T-cell (primary cell): ENCODE measurements at regions of chr12 and their contacts with region 1.

Region 1: GRCh38 chr12:111927346-111927745 is 85.3 kb downstream of the MAPKAPK5 start:
- DNase-seq: no peak
- ATAC-seq: no peak
- H3K4me3 ChIP-seq: no peak overlapping the region
- H3K4me3 Mint-ChIP-seq: no peak overlapping the region
- H3K27ac ChIP-seq: no peak overlapping the region
- H3K27ac Mint-ChIP-seq: no peak overlapping the region
- H3K4me1 ChIP-seq: no peaks in the 10 kb centered on the region
- H3K4me1 Mint-ChIP-seq: no peaks in the 10 kb centered on the region
- H3K27me3 ChIP-seq: no peaks in the 10 kb centered on the region
- H3K27me3 Mint-ChIP-seq: no peaks in the 10 kb centered on the region

Region 2: GRCh38 chr12:111846016-111846415 is 81.3 kb before region 1 on chr12:
- CTCF ChIA-PET with region 1: no interaction called
- POLR2A ChIA-PET with region 1: no interaction called
- DNase-seq: no peak
- ATAC-seq: no peak
- H3K4me3 ChIP-seq: no peak overlapping the region
- H3K4me3 Mint-ChIP-seq: no peak overlapping the region
- H3K27ac ChIP-seq: no peak overlapping the region
- H3K27ac Mint-ChIP-seq: peak overlapping the region in 1 of 2 donors; percentile 3
- H3K4me1 ChIP-seq: peaks cover 7 to 23% of the 10 kb centered on the region in 2 experiments
- H3K4me1 Mint-ChIP-seq: peaks cover 56 to 57% (median 56%) of the 10 kb centered on the region in 3 donors
- H3K27me3 ChIP-seq: no peaks in the 10 kb centered on the region
- H3K27me3 Mint-ChIP-seq: no peaks in the 10 kb centered on the region

Region 3: DNA sequence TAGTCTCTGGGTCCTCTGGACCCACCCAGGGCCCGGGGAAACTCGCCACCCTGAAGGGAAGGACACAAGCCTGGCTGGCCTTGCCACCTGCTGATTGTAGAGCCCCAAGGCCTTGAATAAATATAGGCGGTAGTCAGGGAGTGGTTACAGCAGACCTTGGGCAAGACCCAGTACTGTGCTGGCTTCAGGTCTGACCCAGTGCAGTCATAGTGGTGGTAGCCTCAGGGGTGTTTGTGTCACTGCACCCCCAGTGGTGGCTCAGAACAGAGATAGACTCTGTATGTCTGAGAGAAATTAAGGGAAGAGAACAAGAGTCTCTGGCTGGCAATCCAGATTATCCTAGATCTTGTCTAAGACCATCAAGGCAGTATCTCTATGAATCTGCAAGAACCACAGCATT is 21.8 kb before region 1 on chr12:
- CTCF ChIA-PET with region 1: interaction called in 1 of 2 experiments, 12 read pairs
- POLR2A ChIA-PET with region 1: no interaction called
- DNase-seq: no peak
- ATAC-seq: no peak
- H3K4me3 ChIP-seq: no peak overlapping the region
- H3K4me3 Mint-ChIP-seq: no peak overlapping the region
- H3K27ac ChIP-seq: no peak overlapping the region
- H3K27ac Mint-ChIP-seq: no peak overlapping the region
- H3K4me1 ChIP-seq: no peaks in the 10 kb centered on the region
- H3K4me1 Mint-ChIP-seq: no peaks in the 10 kb centered on the region
- H3K27me3 ChIP-seq: no peaks in the 10 kb centered on the region
- H3K27me3 Mint-ChIP-seq: no peaks in the 10 kb centered on the region